ENCODE measurements at regions of chr17 and their contacts with region 1.

Region 1: GRCh38 chr17:1179818-1180742 is at the start of gene ABR:
- DNase-seq: peak; percentile 25 to 78 (median 70)
- ATAC-seq: peak; percentile 78
- H3K4me3 ChIP-seq: peak within 1 kb of the TSS; percentile 57 to 77
- H3K4me3 Mint-ChIP-seq: peak within 1 kb of the TSS; percentile 78
- H3K27ac ChIP-seq: peak within 1 kb of the TSS in 1 of 2 experiments; percentile 35
- H3K27ac Mint-ChIP-seq: peak within 1 kb of the TSS; percentile 22
- H3K4me1 ChIP-seq: peaks cover 18% of the 10 kb centered on the region
- H3K4me1 Mint-ChIP-seq: peaks cover 18% of the 10 kb centered on the region
- H3K27me3 ChIP-seq: no peaks in the 10 kb centered on the region
- H3K27me3 Mint-ChIP-seq: no peaks in the 10 kb centered on the region
- CTCF ChIP-seq: no peak
- total RNA-seq, gene ABR: 46.4 to 48.7 TPM

Region 2: DNA sequence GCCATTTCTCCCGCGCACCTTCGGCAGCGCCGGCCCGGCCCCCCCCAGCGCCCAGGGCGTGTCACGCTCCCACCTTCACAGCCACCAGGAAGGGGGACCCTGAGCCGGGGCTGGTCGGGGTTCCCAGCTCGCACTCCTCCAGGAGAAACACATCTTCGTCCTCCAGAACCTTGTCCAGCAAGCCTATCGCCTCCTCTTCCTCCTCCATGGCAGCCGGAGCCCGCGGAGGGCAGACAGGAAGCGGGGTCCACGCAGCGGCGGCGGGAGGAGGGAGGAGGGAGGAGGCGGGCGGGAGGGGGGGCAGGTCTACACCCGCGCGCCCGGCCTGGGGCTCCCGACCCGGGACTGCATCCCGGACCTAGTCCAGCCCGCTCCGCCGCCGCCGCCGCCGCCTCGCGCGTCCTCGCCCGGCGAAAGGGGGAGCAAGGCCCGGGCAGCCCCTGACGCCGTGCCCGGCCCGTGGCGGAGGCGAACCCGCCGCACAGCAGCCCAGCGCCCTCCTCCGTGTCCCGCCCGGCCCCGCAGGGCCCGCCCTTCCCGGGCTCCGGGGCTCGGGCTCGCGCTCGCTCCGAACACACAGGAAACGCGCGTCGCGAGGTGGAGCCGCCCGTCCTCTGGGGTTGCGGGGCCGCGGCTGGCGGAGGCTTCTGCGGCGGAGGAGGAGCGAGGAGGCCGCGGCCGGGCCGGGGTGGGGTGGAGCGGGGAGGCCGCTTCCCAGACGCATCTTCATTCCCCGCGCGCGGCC is 71.0 kb before region 1 on chr17:
- CTCF ChIA-PET with region 1: no interaction called
- POLR2A ChIA-PET with region 1: no interaction called
- intact Hi-C with region 1: loop called (anchors 2 to 5 kb)
- DNase-seq: peak; percentile 34 to 87 (median 69)
- ATAC-seq: peak; percentile 82
- H3K4me3 ChIP-seq: peak overlapping the region; percentile 68 to 70
- H3K4me3 Mint-ChIP-seq: peak overlapping the region; percentile 84
- H3K27ac ChIP-seq: peak overlapping the region; percentile 60 to 71
- H3K27ac Mint-ChIP-seq: peak overlapping the region; percentile 82
- H3K4me1 ChIP-seq: peaks cover 24% of the 10 kb centered on the region
- H3K4me1 Mint-ChIP-seq: peaks cover 26% of the 10 kb centered on the region
- H3K27me3 ChIP-seq: no peaks in the 10 kb centered on the region
- H3K27me3 Mint-ChIP-seq: no peaks in the 10 kb centered on the region
- CTCF ChIP-seq: no peak

Region 3: DNA sequence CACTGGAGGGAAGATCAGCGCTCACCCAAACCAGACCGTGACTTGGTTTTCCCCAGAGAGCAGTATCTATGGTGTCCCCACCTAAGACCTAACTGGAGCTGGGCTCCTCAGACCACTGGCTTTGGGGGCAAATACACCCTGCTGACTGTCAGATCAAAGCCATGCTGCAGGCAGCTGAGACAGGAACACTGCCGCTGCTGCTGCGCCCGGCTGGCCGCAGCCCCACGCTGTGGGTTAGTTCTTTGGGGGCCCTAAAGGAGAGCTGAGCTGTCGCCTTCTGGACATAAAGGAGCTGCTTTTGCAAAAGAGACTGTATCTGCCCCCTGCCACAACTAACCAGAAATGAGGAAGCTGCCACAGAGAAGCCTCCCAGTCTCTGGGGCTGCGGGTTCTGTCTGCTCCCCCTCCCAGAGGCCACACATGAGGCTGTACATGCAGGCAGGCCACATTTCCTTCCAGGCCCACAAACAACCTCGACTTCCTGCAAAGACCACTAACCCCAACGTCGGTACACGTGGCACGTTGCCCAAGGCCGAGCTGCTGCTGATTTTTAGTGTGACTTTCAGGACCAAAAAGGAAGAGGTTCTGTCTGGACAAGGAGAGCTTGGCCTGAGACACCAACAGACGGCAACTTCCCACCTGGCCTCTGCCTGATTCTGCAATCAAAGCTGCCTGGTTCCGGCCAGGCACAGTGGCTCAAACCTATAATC is 17.9 kb after region 1 on chr17:
- CTCF ChIA-PET with region 1: interaction called, 97 read pairs
- POLR2A ChIA-PET with region 1: interaction called, 5 read pairs
- intact Hi-C with region 1: loop called (anchors 1 to 2 kb)
- DNase-seq: peak; percentile 55 to 92 (median 77)
- ATAC-seq: peak; percentile 52
- H3K4me3 ChIP-seq: peak overlapping the region in 1 of 2 experiments; percentile 10
- H3K4me3 Mint-ChIP-seq: peak overlapping the region; percentile 61
- H3K27ac ChIP-seq: peak overlapping the region; percentile 29 to 49
- H3K27ac Mint-ChIP-seq: peak overlapping the region; percentile 86
- H3K4me1 ChIP-seq: peaks cover 61% of the 10 kb centered on the region
- H3K4me1 Mint-ChIP-seq: peaks cover 57% of the 10 kb centered on the region
- H3K27me3 ChIP-seq: no peaks in the 10 kb centered on the region
- H3K27me3 Mint-ChIP-seq: no peaks in the 10 kb centered on the region
- CTCF ChIP-seq: no peak

Region 4: GRCh38 chr17:1203111-1203966 is 23.3 kb after region 1 on chr17:
- CTCF ChIA-PET with region 1: interaction called, 97 read pairs
- POLR2A ChIA-PET with region 1: interaction called, 5 read pairs
- intact Hi-C with region 1: loop called (anchors 1 to 2 kb)
- DNase-seq: peak; percentile 30 to 78 (median 52)
- ATAC-seq: peak; percentile 66
- H3K4me3 ChIP-seq: peak overlapping the region in 1 of 2 experiments; percentile 35
- H3K4me3 Mint-ChIP-seq: peak overlapping the region; percentile 5
- H3K27ac ChIP-seq: no peak overlapping the region
- H3K27ac Mint-ChIP-seq: no peak overlapping the region
- H3K4me1 ChIP-seq: peaks cover 48% of the 10 kb centered on the region
- H3K4me1 Mint-ChIP-seq: peaks cover 34% of the 10 kb centered on the region
- H3K27me3 ChIP-seq: no peaks in the 10 kb centered on the region
- H3K27me3 Mint-ChIP-seq: no peaks in the 10 kb centered on the region
- CTCF ChIP-seq: no peak

Measured in CD8-positive, alpha-beta T cell (primary cell).